ENCODE measurements at regions of chr14 and their contacts with region 1.

Region 1: GRCh38 chr14:75399821-75400678 is 27.8 kb upstream of the JDP2 start:
- DNase-seq: peak; percentile 94 to 98
- ATAC-seq: peak; percentile 90 to 93
- H3K4me3 ChIP-seq: no peak overlapping the region
- H3K27ac ChIP-seq: peak overlapping the region; percentile 82 to 89 (median 84)
- H3K4me1 ChIP-seq: peaks cover 25 to 29% of the 10 kb centered on the region in 2 donors
- H3K27me3 ChIP-seq: no peaks in the 10 kb centered on the region
- CTCF ChIP-seq: no peak
- POLR2A ChIP-seq: no peak

Region 2: DNA sequence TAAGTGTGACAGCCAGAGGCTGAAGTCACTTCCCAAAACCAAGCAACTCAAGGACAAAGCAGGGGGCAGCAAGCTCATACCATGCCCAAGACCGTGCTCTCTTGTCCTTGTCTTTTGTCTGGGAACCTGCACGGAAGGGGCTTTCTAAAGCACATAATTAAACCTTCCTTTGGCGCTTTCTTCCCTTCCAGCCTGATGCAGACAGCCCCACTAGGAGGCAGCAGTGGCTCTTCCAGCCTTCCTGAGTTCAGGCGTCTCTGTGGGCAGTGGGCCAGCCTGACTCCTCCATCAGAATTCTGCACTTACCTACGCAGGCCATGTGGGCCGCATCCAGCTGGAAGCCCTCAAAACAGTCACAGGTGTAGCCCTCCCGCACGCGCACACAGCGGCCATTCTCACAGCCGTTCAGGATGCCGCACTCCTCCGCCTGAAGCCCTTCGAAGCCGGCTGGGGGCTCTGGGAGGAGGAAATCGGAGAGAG is 898.9 kb before region 1 on chr14:
- in situ Hi-C with region 1: no loop called
- intact Hi-C with region 1: no loop called
- DNase-seq: peak in 1 of 2 donors; percentile 48
- ATAC-seq: peak; percentile 38 to 43
- H3K4me3 ChIP-seq: no peak overlapping the region
- H3K27ac ChIP-seq: no peak overlapping the region
- H3K4me1 ChIP-seq: no peaks in the 10 kb centered on the region
- H3K27me3 ChIP-seq: no peaks in the 10 kb centered on the region
- CTCF ChIP-seq: peak in 4 of 5 experiments; percentile 20 to 47 (median 36)
- POLR2A ChIP-seq: no peak

Region 3: DNA sequence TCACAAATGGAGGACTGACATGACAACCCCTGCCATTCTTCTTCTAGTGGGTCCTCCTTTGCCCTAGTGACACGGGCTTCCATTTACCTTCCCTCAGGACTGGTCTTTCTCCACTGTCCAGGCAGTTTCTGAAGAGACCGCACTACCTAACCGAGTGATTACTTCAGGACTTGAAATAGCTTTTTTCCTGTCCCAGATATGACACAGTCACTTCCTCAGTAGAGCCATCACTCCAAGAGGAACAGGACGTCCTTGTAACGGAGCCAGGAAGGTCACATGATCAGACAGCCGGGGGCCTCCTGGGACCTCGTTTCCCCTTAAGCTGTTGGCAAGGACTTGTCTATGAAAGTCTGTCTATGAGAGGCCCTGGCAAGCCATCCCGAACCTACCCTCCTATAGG is 59.1 kb before region 1 on chr14:
- in situ Hi-C with region 1: no loop called
- intact Hi-C with region 1: loop called (anchors 2 kb)
- DNase-seq: peak; percentile 97 to 100
- ATAC-seq: peak; percentile 96 to 97
- H3K4me3 ChIP-seq: peak overlapping the region; percentile 33 to 42 (median 36)
- H3K27ac ChIP-seq: peak overlapping the region; percentile 94 to 97 (median 94)
- H3K4me1 ChIP-seq: peaks cover 40 to 42% of the 10 kb centered on the region in 2 donors
- H3K27me3 ChIP-seq: no peaks in the 10 kb centered on the region
- CTCF ChIP-seq: peak in 1 of 5 experiments; percentile 37
- POLR2A ChIP-seq: peak; percentile 84 to 93

Measured in gastrocnemius medialis (tissue), 4 donors.